Left ventricle myocardium inferior (tissue), 1 donor: ENCODE measurements at regions of chr16 and their contacts with region 1.

Region 1: GRCh38 chr16:86519649-86520316 is 9.5 kb downstream of the FOXF1 start:
- DNase-seq: peak; percentile 51
- H3K4me3 ChIP-seq: no peak overlapping the region
- H3K27ac ChIP-seq: no peak overlapping the region
- H3K4me1 ChIP-seq: peaks cover 23% of the 10 kb centered on the region
- H3K27me3 ChIP-seq: peaks cover 100% of the 10 kb centered on the region
- CTCF ChIP-seq: peak; percentile 95

Region 2: DNA sequence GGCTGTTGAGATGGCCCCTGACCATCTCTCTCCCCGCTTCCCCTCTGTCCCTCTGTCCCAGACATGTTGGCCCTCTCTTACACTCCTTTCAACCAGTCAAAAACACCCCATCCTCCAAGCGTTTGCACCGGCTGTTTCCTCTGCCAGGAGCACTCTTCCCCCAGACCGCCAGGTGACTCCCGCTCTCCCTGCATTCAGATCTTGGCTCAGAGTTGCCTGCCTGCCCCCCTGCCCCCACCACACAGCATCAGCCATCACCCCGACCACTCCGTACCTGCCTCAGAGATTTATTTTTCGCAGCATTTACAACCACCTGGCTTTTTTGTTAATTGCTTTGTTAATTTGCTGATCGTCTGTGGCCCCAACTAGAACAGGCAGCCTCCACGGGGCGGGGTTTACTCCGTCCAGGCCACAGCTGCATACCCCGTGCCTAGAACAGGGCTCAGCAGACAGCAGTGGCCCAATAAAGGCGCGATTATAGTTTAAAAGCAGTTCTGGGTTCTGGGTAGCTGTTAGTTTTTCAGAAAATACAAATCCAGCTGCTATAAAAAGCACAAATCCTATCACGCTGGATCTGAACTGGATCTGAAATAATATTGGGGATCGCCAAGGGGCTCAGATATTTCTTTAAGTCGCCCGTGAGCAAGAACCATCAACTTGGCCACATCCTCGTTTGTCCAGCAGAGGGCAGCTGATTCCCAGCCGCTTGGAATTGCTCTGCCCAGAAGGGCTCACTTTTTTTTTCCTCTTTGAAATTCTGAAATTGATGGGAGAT is 447.3 kb before region 1 on chr16:
- intact Hi-C with region 1: loop called (anchors 5 kb)
- DNase-seq: peak; percentile 62
- H3K4me3 ChIP-seq: no peak overlapping the region
- H3K27ac ChIP-seq: no peak overlapping the region
- H3K4me1 ChIP-seq: no peaks in the 10 kb centered on the region
- H3K27me3 ChIP-seq: peaks cover 93% of the 10 kb centered on the region
- CTCF ChIP-seq: peak; percentile 86

Region 3: DNA sequence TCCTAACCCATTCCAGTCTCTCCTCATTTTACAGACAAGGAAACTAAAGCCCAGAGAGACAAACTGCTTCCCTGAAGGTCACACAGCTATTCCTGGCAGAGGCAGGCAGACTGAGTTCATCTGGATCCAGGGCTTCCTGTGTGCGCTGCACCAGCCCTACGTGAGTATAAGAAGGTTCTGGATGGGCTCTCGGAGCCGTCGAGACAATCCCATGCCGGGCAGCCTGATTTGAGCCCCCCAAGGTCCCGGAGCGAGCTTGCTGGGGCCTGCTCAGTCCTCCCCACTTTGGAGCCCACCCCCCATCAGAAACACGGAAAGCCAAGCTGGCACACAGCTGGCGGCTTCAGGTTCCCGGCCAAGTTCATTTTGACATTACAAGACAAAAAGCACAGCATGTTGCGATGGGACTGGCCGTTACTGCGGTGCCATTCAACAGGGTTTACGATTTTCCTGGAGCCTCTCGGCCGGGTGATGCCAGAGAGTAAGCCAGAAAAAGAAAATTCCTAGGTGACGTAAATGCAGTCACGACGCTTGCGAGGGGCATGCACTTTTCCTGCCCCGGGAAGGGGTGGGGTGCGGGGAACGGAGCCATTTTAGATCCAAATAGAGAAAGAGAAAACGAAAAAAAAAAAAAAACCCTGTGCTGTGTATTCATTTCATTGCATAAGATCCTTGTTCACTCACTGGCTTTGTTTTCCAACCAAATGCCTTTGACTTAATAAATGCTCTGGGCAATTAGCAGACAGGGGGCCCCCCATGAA is 176.6 kb before region 1 on chr16:
- intact Hi-C with region 1: loop called (anchors 10 kb)
- DNase-seq: peak; percentile 24
- H3K4me3 ChIP-seq: peak overlapping the region; percentile 45
- H3K27ac ChIP-seq: peak overlapping the region; percentile 61
- H3K4me1 ChIP-seq: peaks cover 17% of the 10 kb centered on the region
- H3K27me3 ChIP-seq: peaks cover 88% of the 10 kb centered on the region
- CTCF ChIP-seq: no peak